Activated CD4-positive, alpha-beta memory T cell treated with anti-CD3 and anti-CD28 coated beads for 36 hours (primary cell): ENCODE measurements at regions of chr14 and their contacts with region 1.

Region 1: DNA sequence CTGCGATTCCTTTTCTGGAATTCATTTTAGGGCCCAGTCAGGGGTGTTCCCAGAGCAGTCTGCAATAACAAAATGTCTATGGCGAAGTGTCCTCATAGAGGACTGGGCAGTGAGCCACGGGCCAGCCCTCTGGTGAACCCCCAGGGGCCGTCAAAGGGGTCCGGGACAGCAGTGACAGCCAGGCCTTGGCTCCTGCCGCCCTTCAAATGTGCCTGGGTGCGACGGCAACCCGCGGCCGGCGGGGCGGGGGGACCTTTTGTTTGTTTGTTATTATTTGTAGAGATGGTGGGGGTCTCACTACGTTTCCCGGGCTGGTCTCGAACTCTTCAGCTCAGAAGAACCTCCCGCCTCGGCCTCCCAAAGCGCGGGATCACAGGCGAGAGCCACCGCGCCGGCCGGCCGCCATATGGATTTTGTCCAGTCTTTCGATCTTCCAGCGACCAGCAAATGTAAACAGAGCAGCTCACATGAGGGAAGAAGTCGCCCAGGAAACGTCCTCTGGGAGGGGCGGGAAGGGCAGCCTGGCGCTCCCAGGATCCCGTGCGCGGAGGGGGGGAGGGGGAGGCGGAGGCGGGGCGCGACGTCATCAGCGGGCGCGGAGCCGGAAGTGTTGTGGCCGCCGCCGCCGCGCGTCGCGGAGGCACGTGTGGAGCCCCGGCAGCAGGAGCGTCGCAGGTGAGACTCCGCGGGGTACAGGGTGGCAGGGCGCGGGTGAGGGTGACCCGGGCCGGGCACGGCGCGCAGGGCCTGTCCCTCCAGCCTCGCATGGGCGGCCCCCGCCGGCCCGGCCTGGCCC is at the start of gene TRMT61A:
- DNase-seq: peak; percentile 88
- H3K4me3 Mint-ChIP-seq: peak within 1 kb of the TSS; percentile 94
- H3K27ac Mint-ChIP-seq: peak within 1 kb of the TSS; percentile 85
- H3K4me1 Mint-ChIP-seq: peaks cover 37% of the 10 kb centered on the region
- H3K27me3 Mint-ChIP-seq: peaks cover under 1% of the 10 kb centered on the region
- total RNA-seq, gene TRMT61A: 7.4 to 7.6 TPM

Region 2: DNA sequence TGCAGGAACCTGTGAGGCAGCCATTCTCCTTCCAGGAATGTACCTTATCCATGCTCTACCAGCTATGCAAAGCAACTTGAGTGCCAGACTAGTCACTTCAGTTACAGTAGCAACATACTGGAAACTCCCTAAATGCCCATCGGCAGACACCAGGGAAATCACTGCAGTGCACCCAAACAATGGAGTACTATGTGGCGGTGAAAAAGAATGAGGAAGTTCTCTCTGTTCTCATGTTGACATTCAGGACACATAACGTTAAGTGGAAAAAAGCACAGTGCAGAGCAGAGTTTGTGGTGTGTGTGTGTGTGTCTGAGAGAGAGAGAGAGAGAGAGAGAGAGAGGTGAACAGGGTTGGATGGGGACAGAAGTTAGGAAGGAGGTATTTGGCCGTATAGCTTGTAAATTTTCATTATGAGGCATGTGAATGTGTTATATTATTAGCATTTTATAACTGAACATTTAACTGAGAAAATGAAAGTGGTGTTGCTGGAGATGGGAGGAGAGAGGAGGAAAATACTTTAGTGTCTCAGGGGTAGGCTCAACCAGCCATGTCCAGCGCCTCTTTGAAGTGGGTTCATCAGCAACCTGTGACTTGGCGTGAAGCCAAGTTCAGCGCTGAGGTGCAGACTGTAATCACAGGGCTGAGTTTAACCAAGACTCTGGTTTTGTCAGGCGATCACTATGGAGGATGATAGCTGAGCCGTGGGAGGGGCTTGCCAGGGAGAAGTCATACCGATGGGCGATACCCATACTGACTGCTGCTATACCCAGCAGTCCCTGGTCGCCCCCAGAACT is 388.3 kb before region 1 on chr14:
- CTCF ChIA-PET with region 1: no interaction called
- POLR2A ChIA-PET with region 1: no interaction called
- intact Hi-C with region 1: no loop called
- DNase-seq: no peak
- H3K4me3 Mint-ChIP-seq: no peak overlapping the region
- H3K27ac Mint-ChIP-seq: no peak overlapping the region
- H3K4me1 Mint-ChIP-seq: peaks cover 6% of the 10 kb centered on the region
- H3K27me3 Mint-ChIP-seq: peaks cover 33% of the 10 kb centered on the region

Region 3: DNA sequence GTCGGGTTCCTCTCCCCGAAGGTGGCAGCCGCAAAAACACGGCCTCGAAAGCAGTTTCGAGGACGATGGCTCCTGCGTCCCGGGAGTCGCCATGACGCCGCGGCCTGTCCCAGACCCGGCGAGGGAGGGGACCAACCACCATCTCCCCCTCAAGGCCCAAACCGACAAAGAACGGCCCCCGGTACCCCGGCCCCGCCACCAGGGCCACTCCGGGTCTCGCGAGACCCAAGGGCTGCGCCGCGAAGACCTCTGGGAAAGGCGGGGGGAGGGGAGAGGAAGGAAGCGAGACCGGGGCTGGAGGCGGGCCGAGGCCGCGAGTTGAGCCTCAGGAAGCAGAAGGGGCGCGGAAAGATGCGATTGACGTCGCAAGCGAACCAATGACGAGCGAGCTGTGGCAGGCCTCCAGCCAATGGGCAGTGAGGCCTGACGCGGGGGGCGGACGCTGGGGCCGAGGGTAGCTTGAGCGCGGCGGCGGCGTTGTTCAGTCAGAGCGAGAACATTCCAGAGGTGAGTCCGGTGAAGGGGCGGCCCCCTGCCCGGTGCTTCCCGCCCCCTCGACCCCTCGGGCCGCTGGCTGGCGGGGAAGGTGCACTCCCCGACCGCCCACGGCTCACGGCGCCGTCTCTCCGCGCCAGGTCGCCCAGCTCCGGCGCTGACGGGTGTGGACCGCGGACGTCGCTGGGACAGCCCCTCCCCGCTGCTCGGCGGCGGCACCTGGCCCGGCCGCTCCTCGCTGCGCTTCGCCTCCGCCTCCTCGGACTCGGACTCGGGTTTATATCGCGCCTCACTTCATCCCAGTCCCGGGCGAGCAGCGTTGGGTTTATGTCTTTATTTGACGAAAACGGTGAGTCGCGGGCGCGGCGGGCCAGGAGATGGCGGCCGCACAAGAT is 194.8 kb before region 1 on chr14 and contains the start of gene EIF5:
- CTCF ChIA-PET with region 1: no interaction called
- POLR2A ChIA-PET with region 1: no interaction called
- intact Hi-C with region 1: loop called (anchors 10 kb)
- DNase-seq: peak; percentile 99
- H3K4me3 Mint-ChIP-seq: peak within 1 kb of the TSS; percentile 88
- H3K27ac Mint-ChIP-seq: peak within 1 kb of the TSS; percentile 96
- H3K4me1 Mint-ChIP-seq: peaks cover 47% of the 10 kb centered on the region
- H3K27me3 Mint-ChIP-seq: peaks cover 1% of the 10 kb centered on the region
- total RNA-seq, gene EIF5: 192 to 196 TPM

Region 4: DNA sequence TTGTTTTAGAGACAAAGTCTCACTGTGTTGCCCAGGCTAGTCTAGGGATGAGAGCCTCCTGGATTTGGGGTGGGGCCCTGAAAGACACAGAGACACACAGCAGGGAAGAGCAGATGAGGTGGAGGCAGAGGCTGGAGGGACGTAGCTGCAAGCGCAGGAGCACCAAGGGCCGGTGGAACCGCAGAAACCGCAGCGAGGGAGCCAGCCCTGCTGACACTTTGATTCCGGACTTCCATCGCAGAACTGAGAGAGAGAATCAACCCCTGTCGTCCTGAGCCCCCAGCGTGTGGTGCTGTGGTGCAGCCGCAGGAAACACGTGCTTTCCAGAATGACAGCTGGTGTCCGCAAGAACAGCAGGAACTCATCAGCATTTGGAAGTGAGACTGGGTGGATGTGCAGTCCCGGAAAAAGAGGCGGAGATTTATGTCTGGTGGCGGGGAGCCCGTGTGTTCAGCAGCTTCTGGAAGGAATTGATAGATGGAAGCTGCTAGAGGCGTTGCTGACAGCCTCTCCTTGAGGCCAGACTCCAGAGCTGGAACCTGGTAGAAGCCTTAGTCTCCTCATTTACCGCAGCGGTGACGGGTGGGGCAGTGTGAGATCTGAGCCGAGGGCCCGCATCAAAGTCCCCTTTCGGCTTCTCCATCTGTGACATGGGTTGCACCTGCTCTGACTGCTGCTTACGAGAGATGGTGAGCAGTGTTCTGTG is 78.3 kb after region 1 on chr14:
- CTCF ChIA-PET with region 1: no interaction called
- POLR2A ChIA-PET with region 1: no interaction called
- intact Hi-C with region 1: no loop called
- DNase-seq: peak; percentile 81
- H3K4me3 Mint-ChIP-seq: peak overlapping the region; percentile 48
- H3K27ac Mint-ChIP-seq: no peak overlapping the region
- H3K4me1 Mint-ChIP-seq: peaks cover 16% of the 10 kb centered on the region
- H3K27me3 Mint-ChIP-seq: peaks cover 4% of the 10 kb centered on the region